Activated naive CD4-positive, alpha-beta T cell treated with anti-CD3 and anti-CD28 coated beads, Interleukin-2, amount 10 ng/mL, durations not matched to agents 7 days and 5 days (primary cell): ENCODE measurements at regions of chr17 and their contacts with region 1.

Region 1: GRCh38 chr17:35764123-35764991 is 3.7 kb downstream of the C17orf50 start:
- DNase-seq: peak; percentile 89
- H3K4me3 Mint-ChIP-seq: peak overlapping the region; percentile 91
- H3K27ac Mint-ChIP-seq: peak overlapping the region; percentile 74
- H3K4me1 Mint-ChIP-seq: peaks cover 12% of the 10 kb centered on the region
- H3K27me3 Mint-ChIP-seq: peaks cover 51% of the 10 kb centered on the region

Region 2: DNA sequence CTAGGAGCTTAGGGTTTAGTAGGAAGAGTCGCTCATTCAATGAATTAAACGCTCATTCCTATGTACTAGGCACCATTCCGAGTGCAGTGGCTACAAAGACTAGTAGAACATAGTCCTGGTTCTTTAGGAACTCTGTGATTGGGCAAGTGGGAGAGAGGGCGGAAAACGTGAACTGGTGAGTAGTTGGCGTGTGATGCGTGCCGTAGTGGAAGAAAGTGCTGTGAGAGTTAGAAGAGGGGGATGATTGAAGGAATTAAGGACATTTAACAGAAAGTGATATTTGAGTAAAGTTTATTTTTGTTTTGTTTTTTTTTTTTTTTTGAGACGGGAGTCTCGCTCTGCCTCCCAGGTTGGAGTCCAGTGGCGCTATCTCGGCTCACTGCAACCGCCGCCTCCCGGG is 195.8 kb before region 1 on chr17:
- CTCF ChIA-PET with region 1: no interaction called
- DNase-seq: peak; percentile 52
- H3K4me3 Mint-ChIP-seq: peak overlapping the region; percentile 75
- H3K27ac Mint-ChIP-seq: peak overlapping the region; percentile 88
- H3K4me1 Mint-ChIP-seq: peaks cover 35% of the 10 kb centered on the region
- H3K27me3 Mint-ChIP-seq: peaks cover 18% of the 10 kb centered on the region

Region 3: GRCh38 chr17:35684055-35684802 is 80.1 kb before region 1 on chr17:
- CTCF ChIA-PET with region 1: no interaction called
- DNase-seq: no peak
- H3K4me3 Mint-ChIP-seq: no peak overlapping the region
- H3K27ac Mint-ChIP-seq: no peak overlapping the region
- H3K4me1 Mint-ChIP-seq: peaks cover 4% of the 10 kb centered on the region
- H3K27me3 Mint-ChIP-seq: no peaks in the 10 kb centered on the region

Region 4: GRCh38 chr17:35726127-35726952 is 38.0 kb before region 1 on chr17:
- CTCF ChIA-PET with region 1: interaction called, 11 read pairs
- DNase-seq: no peak
- H3K4me3 Mint-ChIP-seq: no peak overlapping the region
- H3K27ac Mint-ChIP-seq: no peak overlapping the region
- H3K4me1 Mint-ChIP-seq: peaks cover 11% of the 10 kb centered on the region
- H3K27me3 Mint-ChIP-seq: peaks cover 12% of the 10 kb centered on the region

Region 5: DNA sequence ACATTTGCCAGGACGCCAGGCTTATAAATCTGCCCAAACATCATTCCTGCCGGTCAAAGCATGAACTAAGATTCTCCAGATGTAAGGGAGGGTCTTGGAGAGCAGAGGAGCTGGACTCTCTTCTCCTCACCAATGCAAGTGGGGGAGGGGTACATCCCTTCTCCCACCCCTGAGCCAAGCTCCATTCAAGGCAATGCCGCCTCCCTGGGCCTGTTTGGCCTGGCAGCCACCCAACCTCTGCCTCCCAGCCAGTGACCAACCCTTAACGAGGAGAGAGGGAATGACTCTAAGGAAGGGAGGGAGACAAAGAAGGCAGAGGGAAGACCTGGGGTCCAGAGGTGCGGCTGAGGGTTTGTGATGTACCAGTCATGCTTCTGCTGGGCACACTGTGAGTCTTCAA is 10.1 kb after region 1 on chr17:
- CTCF ChIA-PET with region 1: interaction called, 13 read pairs
- DNase-seq: no peak
- H3K4me3 Mint-ChIP-seq: no peak overlapping the region
- H3K27ac Mint-ChIP-seq: no peak overlapping the region
- H3K4me1 Mint-ChIP-seq: no peaks in the 10 kb centered on the region
- H3K27me3 Mint-ChIP-seq: peaks cover 62% of the 10 kb centered on the region

Region 6: GRCh38 chr17:35808962-35809854 is 44.9 kb after region 1 on chr17 and contains the start of gene TAF15:
- CTCF ChIA-PET with region 1: interaction called, 219 read pairs
- DNase-seq: peak; percentile 98
- H3K4me3 Mint-ChIP-seq: peak within 1 kb of the TSS; percentile 89
- H3K27ac Mint-ChIP-seq: peak within 1 kb of the TSS; percentile 99
- H3K4me1 Mint-ChIP-seq: peaks cover 64% of the 10 kb centered on the region
- H3K27me3 Mint-ChIP-seq: no peaks in the 10 kb centered on the region